Right ventricle myocardium inferior (tissue), 1 donor: ENCODE measurements at regions of chr1 and their contacts with region 1.

Region 1: DNA sequence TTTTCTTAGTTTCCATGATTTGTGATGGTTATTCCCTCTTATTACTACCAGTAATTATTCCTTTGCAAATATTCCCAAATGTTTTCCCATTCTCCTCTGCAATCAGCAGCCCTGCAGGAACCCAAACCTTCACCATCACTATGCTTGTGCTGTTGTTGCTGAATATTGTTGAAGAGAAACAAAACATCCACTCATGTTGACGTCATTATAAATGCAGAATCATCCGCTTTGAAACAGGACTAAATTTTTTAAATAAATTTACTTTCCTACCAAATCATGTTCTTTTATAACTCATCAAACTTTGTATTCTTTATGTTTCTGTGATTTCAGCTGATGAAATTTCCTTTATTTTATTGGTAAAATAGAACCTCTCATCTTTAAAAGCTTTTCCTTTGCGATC is 787.0 kb upstream of the B3GALT2 start:
- DNase-seq: no peak
- ATAC-seq: no peak

Region 2: GRCh38 chr1:194056169-194056568 is 82.7 kb after region 1 on chr1:
- intact Hi-C with region 1: loop called (anchors 1 kb)
- DNase-seq: no peak
- ATAC-seq: no peak